ENCODE measurements at regions of chr18 and their contacts with region 1.

Region 1: GRCh38 chr18:48675352-48675761 is 136.5 kb downstream of the CTIF start:
- DNase-seq: peak; percentile 79 to 89
- ATAC-seq: peak; percentile 85

Region 2: DNA sequence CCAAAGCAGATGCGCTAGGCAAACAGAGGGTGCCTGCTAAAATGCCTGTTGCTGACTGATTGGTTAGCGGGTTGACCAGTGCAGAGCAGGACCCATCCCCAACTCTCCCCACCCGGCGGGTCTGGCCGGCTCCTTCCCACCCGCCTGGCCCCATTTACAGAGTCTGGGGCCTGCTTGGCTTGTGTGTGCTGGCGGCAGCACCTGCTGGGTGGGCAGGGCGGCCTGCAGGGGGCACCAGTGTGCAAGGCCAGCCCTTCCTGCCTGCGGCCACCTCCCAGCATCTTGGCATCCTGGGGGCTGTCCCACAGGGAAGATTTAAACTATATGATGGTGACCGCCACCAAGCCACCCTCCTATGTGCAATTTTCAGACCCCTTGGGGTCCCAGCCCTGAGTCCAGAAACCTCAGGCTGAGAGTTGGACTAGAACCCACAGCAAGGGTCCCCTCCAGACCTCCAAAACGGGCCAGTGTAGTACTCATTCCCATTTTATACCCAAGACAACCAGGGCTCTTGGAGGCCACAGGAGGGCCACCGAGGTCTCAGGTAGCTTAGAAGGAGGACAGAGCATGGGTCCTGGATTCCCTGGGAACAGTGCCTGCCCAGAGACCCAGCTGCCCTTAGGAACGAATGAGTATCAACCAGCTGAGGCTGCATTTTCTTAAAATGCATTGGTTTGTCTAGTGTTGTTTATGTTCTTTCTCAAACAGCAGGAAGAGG is 101.8 kb after region 1 on chr18:
- intact Hi-C with region 1: loop called in 1 of 2 experiments (anchors 10 kb)
- DNase-seq: peak in 1 of 2 donors; percentile 76
- ATAC-seq: peak; percentile 80

Region 3: GRCh38 chr18:49041435-49042245 is 366.3 kb after region 1 on chr18:
- intact Hi-C with region 1: loop called in 1 of 2 experiments (anchors 10 kb)
- DNase-seq: peak in 1 of 2 donors; percentile 77
- ATAC-seq: peak; percentile 79

Region 4: DNA sequence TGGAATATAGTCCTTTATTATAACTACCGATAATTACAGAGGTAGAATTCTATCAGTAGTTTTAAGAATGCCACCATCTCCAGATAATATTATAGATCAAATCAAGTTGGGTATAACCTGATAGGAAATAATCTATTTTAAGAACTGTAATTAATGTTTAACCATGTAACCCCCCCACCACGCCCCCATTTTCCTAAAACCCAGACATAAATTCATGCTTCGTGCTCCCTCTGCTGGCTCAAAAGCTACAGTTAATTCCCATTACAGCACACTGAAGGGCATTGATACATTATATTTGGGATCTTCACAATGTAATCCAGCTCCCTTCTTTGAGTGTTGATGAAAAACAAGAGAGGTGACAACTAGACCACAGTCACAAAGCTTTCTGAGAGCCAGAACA is 503.4 kb after region 1 on chr18:
- intact Hi-C with region 1: loop called in 1 of 2 experiments (anchors 10 kb)
- DNase-seq: peak in 1 of 2 donors; percentile 35
- ATAC-seq: peak; percentile 39